B cell (primary cell): ENCODE measurements at regions of chr11 and their contacts with region 1.

Region 1: DNA sequence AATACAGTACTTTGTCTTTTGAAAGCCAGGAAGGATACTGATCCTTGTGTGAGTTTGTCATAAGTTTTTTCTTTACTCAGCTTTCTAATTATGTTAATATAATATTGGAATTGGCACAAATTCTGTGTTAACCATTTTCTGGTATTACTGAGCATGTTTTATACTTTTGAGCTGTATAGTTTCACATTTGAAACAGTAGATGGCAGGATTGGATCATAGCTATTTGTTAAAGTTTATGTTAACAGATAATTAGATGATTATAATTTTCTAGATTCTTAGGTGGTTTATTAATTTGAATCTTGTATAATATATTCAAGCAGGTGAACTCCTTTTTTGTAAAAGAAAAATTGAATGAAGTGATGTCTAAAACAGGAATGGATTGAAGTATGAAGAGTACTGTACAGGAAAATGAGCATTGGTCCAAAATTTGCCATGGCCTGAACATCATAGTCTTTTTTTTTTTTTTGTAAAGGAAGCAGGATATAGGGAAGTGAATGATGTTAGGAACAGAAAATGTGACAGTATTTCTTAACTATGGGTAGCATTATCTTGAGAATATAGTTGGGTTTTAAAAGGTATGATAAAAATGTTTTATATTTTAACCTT is 102.0 kb downstream of the CYP2R1 start:
- DNase-seq: peak; percentile 42
- ATAC-seq: no peak
- H3K4me3 ChIP-seq: no peak overlapping the region
- H3K4me3 Mint-ChIP-seq: no peak overlapping the region
- H3K27ac ChIP-seq: no peak overlapping the region
- H3K27ac Mint-ChIP-seq: no peak overlapping the region
- H3K4me1 ChIP-seq: no peaks in the 10 kb centered on the region
- H3K4me1 Mint-ChIP-seq: no peaks in the 10 kb centered on the region
- H3K27me3 ChIP-seq: no peaks in the 10 kb centered on the region
- H3K27me3 Mint-ChIP-seq: no peaks in the 10 kb centered on the region
- CTCF ChIP-seq: peak; percentile 78

Region 2: GRCh38 chr11:14643697-14644225 is 146.2 kb before region 1 on chr11 and contains the start of gene PDE3B:
- CTCF ChIA-PET with region 1: interaction called, 21 read pairs
- POLR2A ChIA-PET with region 1: no interaction called
- intact Hi-C with region 1: no loop called
- DNase-seq: peak; percentile 72
- ATAC-seq: peak; percentile 74
- H3K4me3 ChIP-seq: peak within 1 kb of the TSS; percentile 58 to 92 (median 73)
- H3K4me3 Mint-ChIP-seq: peak within 1 kb of the TSS; percentile 92
- H3K27ac ChIP-seq: peak within 1 kb of the TSS in 1 of 2 donors; percentile 38
- H3K27ac Mint-ChIP-seq: peak within 1 kb of the TSS; percentile 64
- H3K4me1 ChIP-seq: peaks cover 7 to 17% of the 10 kb centered on the region in 2 donors
- H3K4me1 Mint-ChIP-seq: peaks cover 9% of the 10 kb centered on the region
- H3K27me3 ChIP-seq: peaks cover 0 to 29% (median 14%) of the 10 kb centered on the region in 4 experiments
- H3K27me3 Mint-ChIP-seq: peaks cover 40% of the 10 kb centered on the region
- CTCF ChIP-seq: peak; percentile 3
- total RNA-seq, gene PDE3B: 60.7 and 70.7 TPM in 2 replicates

Region 3: GRCh38 chr11:14773755-14774154 is 16.2 kb before region 1 on chr11:
- CTCF ChIA-PET with region 1: interaction called, 10 read pairs
- POLR2A ChIA-PET with region 1: no interaction called
- intact Hi-C with region 1: loop called (anchors 2 kb)
- DNase-seq: peak; percentile 22
- ATAC-seq: no peak
- H3K4me3 ChIP-seq: no peak overlapping the region
- H3K4me3 Mint-ChIP-seq: no peak overlapping the region
- H3K27ac ChIP-seq: no peak overlapping the region
- H3K27ac Mint-ChIP-seq: no peak overlapping the region
- H3K4me1 ChIP-seq: peaks cover 9 to 16% of the 10 kb centered on the region in 2 donors
- H3K4me1 Mint-ChIP-seq: peaks cover 17% of the 10 kb centered on the region
- H3K27me3 ChIP-seq: peaks cover 0 to 2% (median 0%) of the 10 kb centered on the region in 4 experiments
- H3K27me3 Mint-ChIP-seq: peaks cover 14% of the 10 kb centered on the region
- CTCF ChIP-seq: peak; percentile 52

Region 4: GRCh38 chr11:15006139-15006759 is 216.3 kb after region 1 on chr11:
- CTCF ChIA-PET with region 1: interaction called, 46 read pairs
- POLR2A ChIA-PET with region 1: no interaction called
- intact Hi-C with region 1: loop called (anchors 1 kb)
- DNase-seq: peak; percentile 55
- ATAC-seq: no peak
- H3K4me3 ChIP-seq: no peak overlapping the region
- H3K4me3 Mint-ChIP-seq: no peak overlapping the region
- H3K27ac ChIP-seq: no peak overlapping the region
- H3K27ac Mint-ChIP-seq: no peak overlapping the region
- H3K4me1 ChIP-seq: no peaks in the 10 kb centered on the region
- H3K4me1 Mint-ChIP-seq: no peaks in the 10 kb centered on the region
- H3K27me3 ChIP-seq: peaks cover 0 to 19% (median 0%) of the 10 kb centered on the region in 4 experiments
- H3K27me3 Mint-ChIP-seq: peaks cover 57% of the 10 kb centered on the region
- CTCF ChIP-seq: peak; percentile 75

Region 5: DNA sequence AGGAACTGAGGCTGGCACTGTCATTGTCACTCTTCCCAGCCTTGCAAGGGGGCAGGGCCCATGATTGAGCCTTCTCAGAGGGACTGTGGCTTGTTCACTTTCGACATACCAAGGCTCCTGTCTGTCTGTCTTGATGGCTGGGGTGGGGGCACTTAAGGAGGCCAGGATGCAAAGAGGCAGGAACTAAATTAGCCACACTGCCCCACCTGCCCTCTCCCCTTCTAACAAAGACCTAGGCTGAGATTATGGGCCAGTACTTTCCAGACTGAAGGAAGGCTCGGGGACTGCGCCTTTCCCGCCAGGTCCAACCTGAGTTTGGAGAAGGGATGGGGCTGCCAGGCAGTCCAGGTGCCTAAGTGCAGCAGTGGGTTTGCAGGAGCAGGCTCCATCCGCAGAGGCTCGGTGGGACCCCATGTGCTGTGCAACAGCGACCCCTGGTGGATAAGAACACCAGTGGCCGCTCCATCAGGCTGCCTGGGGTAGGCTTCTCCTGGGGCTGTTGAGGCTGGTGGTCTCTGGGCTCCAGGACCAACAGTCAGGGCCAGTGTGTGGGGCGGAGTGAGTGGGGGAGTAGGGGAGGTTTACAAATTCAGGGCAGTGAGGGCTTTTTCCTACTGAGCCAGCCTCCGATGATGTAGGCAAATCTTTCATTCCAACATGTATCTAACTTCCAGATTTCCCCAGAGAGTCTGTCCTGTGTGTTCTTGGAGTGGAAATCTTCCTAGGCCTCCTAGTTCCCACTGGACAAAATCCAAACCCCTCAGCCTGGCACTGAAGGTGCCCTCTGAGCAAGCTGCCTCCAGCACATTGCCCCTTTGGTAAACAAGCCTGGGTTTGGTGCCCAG is 418.6 kb after region 1 on chr11:
- CTCF ChIA-PET with region 1: interaction called, 8 read pairs
- POLR2A ChIA-PET with region 1: no interaction called
- intact Hi-C with region 1: loop called (anchors 1 kb)
- DNase-seq: peak; percentile 81
- ATAC-seq: peak; percentile 92
- H3K4me3 ChIP-seq: no peak overlapping the region
- H3K4me3 Mint-ChIP-seq: no peak overlapping the region
- H3K27ac ChIP-seq: no peak overlapping the region
- H3K27ac Mint-ChIP-seq: no peak overlapping the region
- H3K4me1 ChIP-seq: no peaks in the 10 kb centered on the region
- H3K4me1 Mint-ChIP-seq: no peaks in the 10 kb centered on the region
- H3K27me3 ChIP-seq: peaks cover 0 to 17% (median 0%) of the 10 kb centered on the region in 4 experiments
- H3K27me3 Mint-ChIP-seq: peaks cover 19% of the 10 kb centered on the region
- CTCF ChIP-seq: peak; percentile 89